A673 (cell line): ENCODE measurements at regions of chr3 and their contacts with region 1.

Region 1: DNA sequence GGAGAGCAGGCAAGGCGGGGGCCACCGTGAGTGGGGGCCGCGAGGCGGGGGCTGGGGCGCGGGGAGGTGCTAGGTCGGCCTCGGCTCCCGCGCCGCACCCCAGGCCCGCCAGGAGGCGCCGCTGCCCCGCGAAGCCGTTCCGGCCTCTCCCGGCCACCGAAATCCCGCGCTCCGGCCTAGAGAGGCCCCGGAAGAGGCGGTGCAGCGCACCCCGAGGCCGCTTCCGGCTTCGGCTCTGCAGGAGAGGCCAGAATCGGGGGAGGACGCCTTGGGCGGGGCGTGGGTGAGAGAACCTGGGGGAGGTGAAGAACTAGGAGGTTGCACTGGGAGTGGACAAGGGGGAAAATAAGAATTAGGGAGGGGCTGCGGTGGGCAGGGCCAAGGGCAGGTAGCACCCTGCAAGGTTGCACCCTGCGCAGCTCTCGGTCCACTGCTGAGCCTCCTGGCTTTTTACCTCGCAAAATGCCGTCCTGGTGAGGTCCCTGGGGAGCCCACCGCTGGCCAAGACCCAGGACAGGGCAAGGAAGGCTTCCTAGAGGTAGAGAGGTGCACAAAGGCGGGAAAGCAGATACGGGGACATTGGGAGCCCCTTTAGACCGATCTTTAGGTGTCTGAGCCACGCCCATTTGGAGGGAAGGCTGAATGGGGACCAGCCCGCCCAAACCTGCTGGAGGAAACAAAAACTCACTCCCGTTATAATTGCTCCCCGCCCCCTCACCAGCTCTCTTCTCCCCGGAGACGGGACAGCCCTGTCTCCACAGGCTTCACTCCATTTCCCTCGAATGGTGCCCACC is 8.4 kb upstream of the GNAI2 start:
- DNase-seq: peak; percentile 92
- H3K4me3 ChIP-seq: peak overlapping the region; percentile 62
- H3K27ac ChIP-seq: peak overlapping the region; percentile 82
- H3K4me1 ChIP-seq: peaks cover 8% of the 10 kb centered on the region
- H3K27me3 ChIP-seq: no peaks in the 10 kb centered on the region
- CTCF ChIP-seq: peak; percentile 54

Region 2: DNA sequence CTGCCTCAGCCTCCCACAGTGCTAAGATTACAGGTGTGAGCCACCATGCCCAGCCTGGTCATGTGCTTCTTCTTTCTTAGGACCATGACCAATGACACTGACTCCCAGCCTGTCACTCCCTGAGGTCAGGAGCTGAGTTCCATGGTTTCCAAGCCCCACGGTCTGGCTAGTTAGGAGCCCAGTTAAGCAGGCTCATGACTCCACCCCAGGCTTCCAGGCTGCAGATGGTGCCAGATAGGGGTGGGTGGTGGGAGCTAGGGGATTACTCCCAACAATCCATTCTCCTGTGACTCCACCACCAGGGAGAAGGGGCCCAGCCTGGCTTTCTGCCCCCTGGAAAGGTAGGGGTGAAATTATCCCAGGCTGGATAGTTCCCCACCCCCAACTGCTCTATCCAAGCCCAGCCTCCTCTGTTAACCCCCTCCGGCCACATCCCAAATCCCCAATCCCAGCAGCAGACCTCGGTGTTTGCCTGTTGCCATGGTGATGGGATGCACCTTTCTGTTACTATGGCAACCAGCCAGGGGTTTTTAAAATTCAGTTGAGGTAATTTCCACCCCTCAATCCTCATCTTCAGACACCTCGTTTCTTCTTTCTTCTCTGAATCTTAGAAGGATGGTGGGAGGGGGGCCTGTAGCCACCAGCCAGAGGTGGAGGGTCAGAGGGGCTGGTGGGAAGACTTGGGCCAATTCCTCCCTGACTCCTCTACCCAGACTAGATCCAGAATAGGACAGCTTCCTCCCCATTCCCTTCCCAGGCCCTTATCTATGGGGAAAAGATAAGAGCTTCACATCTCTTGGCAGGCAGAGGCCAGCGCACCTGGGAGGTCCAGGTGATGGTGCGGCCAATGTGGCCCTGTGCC is 94.9 kb before region 1 on chr3:
- CTCF ChIA-PET with region 1: no interaction called
- POLR2A ChIA-PET with region 1: no interaction called
- intact Hi-C with region 1: no loop called
- DNase-seq: no peak
- H3K4me3 ChIP-seq: no peak overlapping the region
- H3K27ac ChIP-seq: no peak overlapping the region
- H3K4me1 ChIP-seq: peaks cover 16% of the 10 kb centered on the region
- H3K27me3 ChIP-seq: no peaks in the 10 kb centered on the region
- CTCF ChIP-seq: no peak

Region 3: GRCh38 chr3:50192689-50193141 is 34.9 kb before region 1 on chr3:
- CTCF ChIA-PET with region 1: interaction called, 7 read pairs
- POLR2A ChIA-PET with region 1: no interaction called
- intact Hi-C with region 1: loop called (anchors 2 kb)
- DNase-seq: peak; percentile 63
- H3K4me3 ChIP-seq: no peak overlapping the region
- H3K27ac ChIP-seq: no peak overlapping the region
- H3K4me1 ChIP-seq: no peaks in the 10 kb centered on the region
- H3K27me3 ChIP-seq: peaks cover 15% of the 10 kb centered on the region
- CTCF ChIP-seq: peak; percentile 74

Region 4: GRCh38 chr3:50245831-50246516 is 18.4 kb after region 1 on chr3:
- CTCF ChIA-PET with region 1: interaction called, 17 read pairs
- POLR2A ChIA-PET with region 1: no interaction called
- intact Hi-C with region 1: loop called (anchors 1 kb)
- DNase-seq: peak; percentile 85
- H3K4me3 ChIP-seq: peak overlapping the region; percentile 42
- H3K27ac ChIP-seq: peak overlapping the region; percentile 74
- H3K4me1 ChIP-seq: peaks cover 18% of the 10 kb centered on the region
- H3K27me3 ChIP-seq: no peaks in the 10 kb centered on the region
- CTCF ChIP-seq: peak; percentile 85

Region 5: GRCh38 chr3:50272911-50273693 is 45.5 kb after region 1 on chr3:
- CTCF ChIA-PET with region 1: no interaction called
- POLR2A ChIA-PET with region 1: no interaction called
- intact Hi-C with region 1: loop called (anchors 1 kb)
- DNase-seq: peak; percentile 59
- H3K4me3 ChIP-seq: peak overlapping the region; percentile 25
- H3K27ac ChIP-seq: no peak overlapping the region
- H3K4me1 ChIP-seq: no peaks in the 10 kb centered on the region
- H3K27me3 ChIP-seq: peaks cover 4% of the 10 kb centered on the region
- CTCF ChIP-seq: peak; percentile 82

Region 6: GRCh38 chr3:50292159-50293078 is 64.8 kb after region 1 on chr3 and contains the start of gene IFRD2:
- CTCF ChIA-PET with region 1: interaction called, 15 read pairs
- POLR2A ChIA-PET with region 1: no interaction called
- intact Hi-C with region 1: no loop called
- DNase-seq: peak; percentile 95
- H3K4me3 ChIP-seq: peak within 1 kb of the TSS; percentile 77
- H3K27ac ChIP-seq: peak within 1 kb of the TSS; percentile 85
- H3K4me1 ChIP-seq: no peaks in the 10 kb centered on the region
- H3K27me3 ChIP-seq: no peaks in the 10 kb centered on the region
- CTCF ChIP-seq: no peak
- total RNA-seq, gene IFRD2: 62.2 and 77.4 TPM in 2 replicates